PC-9 (cell line): ENCODE measurements at regions of chr9 and their contacts with region 1.

Region 1: DNA sequence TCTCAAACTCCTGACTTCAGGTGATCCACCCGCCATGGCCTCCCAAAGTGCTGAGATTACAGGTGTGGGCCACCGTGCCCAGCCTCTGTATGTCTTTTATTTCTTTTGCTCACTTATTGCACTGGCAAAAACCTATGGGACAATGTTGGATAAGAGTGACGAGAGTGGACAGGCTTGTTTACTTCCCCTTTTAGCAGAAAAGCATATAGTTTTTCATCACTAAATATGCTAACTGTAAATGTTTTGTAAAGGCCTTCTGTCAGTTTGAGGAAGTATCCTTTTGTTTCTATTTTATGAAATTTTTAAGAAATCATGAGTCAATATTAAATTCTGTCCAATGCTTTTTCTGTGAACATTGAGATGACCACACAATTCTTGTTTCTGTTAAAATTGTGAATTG is 103.3 kb downstream of the AUH start:
- DNase-seq: no peak
- H3K4me3 ChIP-seq: no peak overlapping the region
- H3K27ac ChIP-seq: no peak overlapping the region
- H3K4me1 ChIP-seq: no peaks in the 10 kb centered on the region
- H3K27me3 ChIP-seq: no peaks in the 10 kb centered on the region
- CTCF ChIP-seq: no peak

Region 2: DNA sequence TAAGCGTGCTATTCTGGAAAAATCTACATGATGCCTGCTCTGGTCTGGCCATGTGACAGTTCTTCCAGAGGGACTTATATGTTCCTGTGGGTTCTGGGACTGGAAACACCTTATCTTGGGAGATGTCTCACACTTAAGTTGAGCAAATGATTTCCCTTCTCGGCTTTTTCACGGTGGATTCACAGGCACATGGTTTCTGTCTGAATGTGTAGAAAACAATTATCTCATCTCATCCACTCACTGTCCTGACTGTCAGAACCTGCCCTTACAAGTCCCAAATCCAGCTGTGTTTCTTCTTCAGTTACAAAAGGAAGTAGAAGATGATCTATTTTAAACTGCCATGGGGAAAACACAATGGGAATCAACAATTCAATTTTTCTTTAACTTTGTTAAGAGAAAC is 272.8 kb before region 1 on chr9:
- CTCF ChIA-PET with region 1: interaction called, 11 read pairs
- POLR2A ChIA-PET with region 1: no interaction called
- intact Hi-C with region 1: no loop called
- DNase-seq: no peak
- H3K4me3 ChIP-seq: no peak overlapping the region
- H3K27ac ChIP-seq: no peak overlapping the region
- H3K4me1 ChIP-seq: no peaks in the 10 kb centered on the region
- H3K27me3 ChIP-seq: no peaks in the 10 kb centered on the region
- CTCF ChIP-seq: no peak